Activated CD8-positive, alpha-beta memory T cell treated with anti-CD3 and anti-CD28 coated beads, Interleukin-2, amount 10 ng/mL, durations not matched to agents 7 days and 5 days (primary cell): ENCODE measurements at regions of chr10 and their contacts with region 1.

Region 1: GRCh38 chr10:110502851-110503301 is 5.2 kb downstream of the DUSP5 start:
- DNase-seq: no peak
- ATAC-seq: no peak
- H3K4me3 Mint-ChIP-seq: peak overlapping the region; percentile 99
- H3K27ac Mint-ChIP-seq: peak overlapping the region; percentile 97
- H3K4me1 Mint-ChIP-seq: peaks cover 76% of the 10 kb centered on the region
- H3K27me3 Mint-ChIP-seq: no peaks in the 10 kb centered on the region

Region 2: DNA sequence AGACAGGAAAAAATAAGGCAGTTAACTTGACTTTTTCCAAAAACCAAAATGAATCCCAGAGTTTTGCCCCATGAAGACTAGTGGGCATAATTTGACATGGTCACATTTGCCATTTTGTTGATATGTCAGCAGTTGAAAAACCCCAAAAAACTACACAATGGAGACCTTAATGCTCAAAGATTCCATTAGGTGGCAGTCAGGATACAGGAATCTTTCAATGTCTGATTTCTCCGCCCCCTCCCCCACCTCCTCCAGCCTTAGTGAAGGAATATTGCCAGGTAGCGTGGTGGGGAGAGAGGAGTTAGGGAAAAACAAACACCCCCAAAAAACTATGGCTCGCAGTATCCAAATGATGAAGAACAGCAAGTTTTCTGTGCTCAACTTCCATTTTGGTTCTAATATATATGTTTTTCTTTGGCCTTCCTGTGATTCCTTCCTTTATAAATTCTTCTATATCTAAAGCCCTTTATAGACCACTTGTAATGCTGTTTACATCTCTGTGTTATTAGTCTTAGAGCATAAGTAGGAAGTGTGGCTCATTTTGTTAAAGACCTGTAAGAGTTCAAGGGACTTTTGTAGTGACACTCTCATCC is 191.4 kb before region 1 on chr10:
- CTCF ChIA-PET with region 1: interaction called, 37 read pairs
- DNase-seq: peak; percentile 56
- ATAC-seq: peak; percentile 72
- H3K4me3 Mint-ChIP-seq: no peak overlapping the region
- H3K27ac Mint-ChIP-seq: peak overlapping the region; percentile 50
- H3K4me1 Mint-ChIP-seq: peaks cover 44% of the 10 kb centered on the region
- H3K27me3 Mint-ChIP-seq: no peaks in the 10 kb centered on the region